Activated CD4-positive, alpha-beta memory T cell treated with anti-CD3 and anti-CD28 coated beads, Interleukin-2, amount 10 ng/mL, durations not matched to agents 7 days and 5 days (primary cell): ENCODE measurements at regions of chr6 and their contacts with region 1.

Region 1: DNA sequence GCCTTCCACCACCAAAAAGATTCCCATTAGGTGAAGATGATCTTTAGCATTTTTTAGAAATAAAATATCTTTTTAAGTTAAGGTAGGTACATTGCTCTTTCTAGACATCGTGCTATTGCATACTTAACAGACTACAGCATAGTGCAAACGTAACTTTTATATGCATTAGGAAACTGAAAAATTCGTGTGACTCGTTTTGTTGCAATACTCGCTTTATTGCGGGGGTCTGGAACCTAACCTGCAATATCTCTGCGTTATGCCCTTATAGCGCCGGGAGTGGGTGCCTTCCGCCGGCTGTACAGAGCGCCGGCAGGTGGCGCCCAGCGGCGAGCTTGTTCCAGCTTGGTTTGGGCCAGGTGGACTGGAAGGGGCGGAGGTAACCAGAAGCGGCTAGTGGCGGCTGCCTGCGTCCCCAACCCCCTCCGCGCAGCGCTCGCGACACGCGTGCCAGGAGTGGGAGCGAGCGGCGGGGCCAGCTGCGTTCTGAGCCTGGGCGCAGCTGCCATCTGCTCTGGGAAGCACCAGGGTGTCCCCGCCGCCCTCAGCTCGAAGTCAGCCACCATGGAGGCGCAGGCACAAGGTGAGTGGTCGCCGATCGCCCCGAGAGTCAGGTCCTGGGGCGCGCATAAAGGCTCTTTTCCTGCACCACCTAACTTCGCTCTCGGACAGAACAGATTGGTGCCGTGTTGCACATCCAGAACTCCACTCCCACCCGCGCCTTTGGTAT is at the start of gene TPD52L1:
- DNase-seq: peak; percentile 65
- H3K4me3 Mint-ChIP-seq: peak within 1 kb of the TSS; percentile 55
- H3K27ac Mint-ChIP-seq: no peak within 1 kb of the TSS
- H3K4me1 Mint-ChIP-seq: peaks cover 6% of the 10 kb centered on the region
- H3K27me3 Mint-ChIP-seq: peaks cover 45% of the 10 kb centered on the region
- total RNA-seq, gene TPD52L1: not detected

Region 2: DNA sequence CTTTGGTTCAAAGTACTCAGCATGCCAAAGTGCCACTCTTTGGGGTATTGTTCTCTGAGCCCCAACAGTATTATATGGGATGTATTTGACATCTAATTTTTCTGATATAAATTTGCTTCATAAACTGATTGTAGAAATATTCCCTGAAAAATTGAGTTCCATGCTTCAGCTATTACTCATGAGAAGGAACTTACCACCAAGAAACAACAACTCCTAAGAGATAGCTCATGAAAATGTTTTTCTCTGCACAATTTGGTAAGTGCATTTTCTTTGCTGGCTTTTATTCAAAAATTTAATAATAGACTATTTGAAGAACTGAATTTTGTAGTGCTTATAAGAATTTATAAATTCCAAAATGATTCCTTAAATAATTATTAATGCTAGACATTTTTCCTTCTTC is 12.7 kb before region 1 on chr6:
- CTCF ChIA-PET with region 1: interaction called, 10 read pairs
- POLR2A ChIA-PET with region 1: no interaction called
- DNase-seq: no peak
- H3K4me3 Mint-ChIP-seq: no peak overlapping the region
- H3K27ac Mint-ChIP-seq: no peak overlapping the region
- H3K4me1 Mint-ChIP-seq: no peaks in the 10 kb centered on the region
- H3K27me3 Mint-ChIP-seq: peaks cover 5% of the 10 kb centered on the region

Region 3: DNA sequence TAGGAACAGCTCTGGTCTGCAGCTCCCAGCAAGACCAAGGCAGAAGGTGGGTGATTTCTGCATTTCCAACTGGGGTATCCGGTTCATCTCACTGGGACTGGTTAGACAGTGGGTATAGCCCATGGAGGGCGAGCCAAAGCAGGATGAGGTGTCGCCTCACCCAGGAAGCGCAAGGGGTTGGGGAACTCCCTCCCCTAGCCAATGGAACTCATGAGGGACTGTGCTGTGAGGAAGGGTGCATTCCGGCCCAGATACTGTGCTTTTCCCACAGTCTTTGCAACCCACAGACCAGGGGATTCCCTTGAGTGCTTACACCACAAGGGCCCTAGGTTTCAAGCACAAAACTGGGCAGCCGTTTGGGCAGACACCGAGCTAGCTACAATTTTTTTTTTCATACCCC is 126.4 kb after region 1 on chr6:
- CTCF ChIA-PET with region 1: no interaction called
- POLR2A ChIA-PET with region 1: no interaction called
- DNase-seq: no peak
- H3K4me3 Mint-ChIP-seq: no peak overlapping the region
- H3K27ac Mint-ChIP-seq: no peak overlapping the region
- H3K4me1 Mint-ChIP-seq: peaks cover 32% of the 10 kb centered on the region
- H3K27me3 Mint-ChIP-seq: no peaks in the 10 kb centered on the region